Activated B cell treated with CpG ODN at 0.5 μM for 24 hours (primary cell): ENCODE measurements at regions of chr11 and their contacts with region 1.

Region 1: GRCh38 chr11:101914738-101915426 is at the start of gene CEP126:
- DNase-seq: peak; percentile 98
- ATAC-seq: peak; percentile 90
- H3K4me3 Mint-ChIP-seq: peak within 1 kb of the TSS; percentile 94
- H3K27ac Mint-ChIP-seq: peak within 1 kb of the TSS; percentile 95
- H3K4me1 Mint-ChIP-seq: peaks cover 27% of the 10 kb centered on the region
- H3K27me3 Mint-ChIP-seq: peaks cover 10% of the 10 kb centered on the region
- CTCF ChIP-seq: no peak
- total RNA-seq, gene CEP126: 1.4 and 1.5 TPM in 2 replicates

Region 2: GRCh38 chr11:100681064-100681502 is 1233.8 kb before region 1 on chr11:
- CTCF ChIA-PET with region 1: no interaction called
- POLR2A ChIA-PET with region 1: no interaction called
- intact Hi-C with region 1: loop called (anchors 1 kb)
- DNase-seq: peak; percentile 58
- ATAC-seq: peak; percentile 98
- H3K4me3 Mint-ChIP-seq: peak overlapping the region; percentile 35
- H3K27ac Mint-ChIP-seq: peak overlapping the region; percentile 79
- H3K4me1 Mint-ChIP-seq: peaks cover 57% of the 10 kb centered on the region
- H3K27me3 Mint-ChIP-seq: no peaks in the 10 kb centered on the region
- CTCF ChIP-seq: no peak

Region 3: DNA sequence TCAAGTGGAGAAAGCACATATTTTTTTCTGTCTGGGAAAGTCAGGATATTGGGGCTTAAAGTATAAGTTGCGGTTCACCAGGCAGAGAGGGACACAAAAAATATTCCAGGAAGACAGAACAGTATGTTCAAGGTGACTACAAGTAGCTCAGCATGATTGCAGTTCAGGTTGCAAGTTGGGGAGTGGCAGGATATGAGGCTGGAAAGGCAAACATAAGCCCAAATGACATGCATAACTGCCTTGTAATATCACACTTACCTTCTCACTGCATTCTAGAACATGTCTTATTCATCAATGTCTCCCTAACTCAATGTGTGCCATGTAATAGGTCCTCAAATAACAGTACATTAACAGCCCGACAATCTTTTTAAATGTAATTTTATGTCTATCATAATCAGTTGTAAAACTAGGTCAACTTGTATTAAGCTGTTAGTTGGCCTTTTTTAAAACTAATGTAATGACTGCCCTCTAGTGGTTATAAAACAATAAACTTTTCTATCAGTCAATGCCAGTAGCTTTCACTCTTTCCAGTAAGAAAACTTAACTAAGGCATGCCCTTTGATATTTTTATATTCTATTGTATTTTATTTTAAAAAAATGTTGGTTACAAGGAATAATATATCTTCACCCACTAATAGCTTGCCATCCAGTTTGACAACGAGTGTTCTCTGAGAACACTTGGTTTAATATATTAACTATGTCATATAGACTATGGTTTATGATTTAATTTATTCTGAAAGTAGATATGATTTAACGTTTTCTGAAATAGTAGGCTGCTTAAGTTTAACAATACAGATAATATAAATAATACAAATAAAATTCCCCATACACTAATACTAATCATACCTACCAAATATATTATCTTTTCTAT is 92.9 kb after region 1 on chr11:
- CTCF ChIA-PET with region 1: interaction called, 7 read pairs
- POLR2A ChIA-PET with region 1: interaction called, 5 read pairs
- intact Hi-C with region 1: loop called (anchors 1 kb)
- DNase-seq: no peak
- ATAC-seq: no peak
- H3K4me3 Mint-ChIP-seq: no peak overlapping the region
- H3K27ac Mint-ChIP-seq: no peak overlapping the region
- H3K4me1 Mint-ChIP-seq: no peaks in the 10 kb centered on the region
- H3K27me3 Mint-ChIP-seq: peaks cover 11% of the 10 kb centered on the region
- CTCF ChIP-seq: peak; percentile 81

Region 4: DNA sequence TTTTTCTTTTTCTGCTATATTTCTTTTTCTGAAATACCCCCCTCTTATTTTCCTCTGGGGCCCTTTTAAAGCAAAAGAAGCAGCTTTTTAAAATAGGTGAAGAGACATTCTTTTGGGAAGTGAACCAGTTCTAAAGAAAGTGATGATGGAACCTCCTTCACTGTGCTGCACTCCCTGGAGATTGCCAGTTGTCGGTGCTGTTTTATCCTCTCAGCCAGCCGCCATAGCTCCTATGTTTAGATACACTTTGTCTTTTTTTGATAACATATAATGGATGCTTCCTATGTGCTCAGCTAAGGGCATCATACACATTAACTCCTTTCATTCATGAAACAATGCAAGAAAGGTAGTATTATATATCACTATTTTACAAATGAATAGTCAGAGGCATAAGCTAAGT is 146.4 kb after region 1 on chr11:
- CTCF ChIA-PET with region 1: no interaction called
- POLR2A ChIA-PET with region 1: no interaction called
- intact Hi-C with region 1: no loop called
- DNase-seq: no peak
- ATAC-seq: no peak
- H3K4me3 Mint-ChIP-seq: no peak overlapping the region
- H3K27ac Mint-ChIP-seq: no peak overlapping the region
- H3K4me1 Mint-ChIP-seq: no peaks in the 10 kb centered on the region
- H3K27me3 Mint-ChIP-seq: peaks cover 3% of the 10 kb centered on the region
- CTCF ChIP-seq: no peak

Region 5: DNA sequence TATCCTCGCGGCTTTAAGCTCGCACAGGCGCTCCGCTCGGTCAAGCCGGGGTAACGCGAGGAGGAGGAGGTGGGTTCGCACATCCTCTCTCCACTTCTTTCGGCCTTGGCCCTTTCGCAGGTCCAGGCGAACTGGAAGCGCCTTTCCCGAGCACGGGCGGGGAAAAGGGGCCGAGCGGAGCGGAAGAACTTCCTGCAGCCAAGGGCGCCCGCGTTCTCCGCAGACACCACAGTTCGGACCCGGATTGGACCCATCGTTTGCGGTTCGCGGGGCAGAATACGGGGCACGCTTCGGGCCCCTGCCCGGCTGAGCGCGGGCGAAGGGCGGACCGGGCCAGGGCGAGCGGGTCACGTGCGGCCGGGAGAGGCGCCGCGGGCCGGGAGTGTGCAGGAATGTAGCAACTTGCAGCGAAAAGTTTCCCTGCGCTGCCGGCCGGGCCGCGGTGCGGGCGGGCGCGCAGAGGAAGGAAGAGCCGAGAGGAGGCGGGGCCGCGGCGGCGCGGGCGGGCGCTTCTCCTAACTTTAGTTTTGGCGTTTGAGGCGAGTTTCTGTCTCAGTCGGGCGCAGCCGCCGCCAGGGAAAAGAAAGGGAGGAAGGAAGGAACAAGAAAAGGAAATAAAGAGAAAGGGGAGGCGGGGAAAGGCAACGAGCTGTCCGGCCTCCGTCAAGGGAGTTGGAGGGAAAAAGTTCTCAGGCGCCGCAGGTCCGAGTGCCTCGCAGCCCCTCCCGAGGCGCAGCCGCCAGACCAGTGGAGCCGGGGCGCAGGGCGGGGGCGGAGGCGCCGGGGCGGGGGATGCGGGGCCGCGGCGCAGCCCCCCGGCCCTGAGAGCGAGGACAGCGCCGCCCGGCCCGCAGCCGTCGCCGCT is 195.2 kb after region 1 on chr11 and contains the start of gene YAP1:
- CTCF ChIA-PET with region 1: no interaction called
- POLR2A ChIA-PET with region 1: no interaction called
- intact Hi-C with region 1: loop called (anchors 2 kb)
- DNase-seq: peak; percentile 64
- ATAC-seq: peak; percentile 75
- H3K4me3 Mint-ChIP-seq: peak within 1 kb of the TSS; percentile 96
- H3K27ac Mint-ChIP-seq: peak within 1 kb of the TSS; percentile 72
- H3K4me1 Mint-ChIP-seq: peaks cover 12% of the 10 kb centered on the region
- H3K27me3 Mint-ChIP-seq: peaks cover 41% of the 10 kb centered on the region
- CTCF ChIP-seq: no peak
- total RNA-seq, gene YAP1: not detected in 2 replicates

Region 6: GRCh38 chr11:102268329-102269193 is 353.7 kb after region 1 on chr11:
- CTCF ChIA-PET with region 1: no interaction called
- POLR2A ChIA-PET with region 1: no interaction called
- intact Hi-C with region 1: loop called (anchors 5 kb)
- DNase-seq: peak; percentile 54
- ATAC-seq: peak; percentile 100
- H3K4me3 Mint-ChIP-seq: peak overlapping the region; percentile 56
- H3K27ac Mint-ChIP-seq: no peak overlapping the region
- H3K4me1 Mint-ChIP-seq: peaks cover 15% of the 10 kb centered on the region
- H3K27me3 Mint-ChIP-seq: peaks cover 14% of the 10 kb centered on the region
- CTCF ChIP-seq: no peak

Region 7: GRCh38 chr11:103091801-103092524 is 1177.1 kb after region 1 on chr11 and contains the start of gene DCUN1D5:
- CTCF ChIA-PET with region 1: no interaction called
- POLR2A ChIA-PET with region 1: no interaction called
- intact Hi-C with region 1: loop called (anchors 5 kb)
- DNase-seq: peak; percentile 90
- ATAC-seq: peak; percentile 99
- H3K4me3 Mint-ChIP-seq: peak within 1 kb of the TSS; percentile 93
- H3K27ac Mint-ChIP-seq: peak within 1 kb of the TSS; percentile 88
- H3K4me1 Mint-ChIP-seq: peaks cover 26% of the 10 kb centered on the region
- H3K27me3 Mint-ChIP-seq: peaks cover 23% of the 10 kb centered on the region
- CTCF ChIP-seq: no peak
- total RNA-seq, gene DCUN1D5: 20.9 and 21.4 TPM in 2 replicates

Region 8: GRCh38 chr11:103108933-103109817 is 1194.3 kb after region 1 on chr11 and contains the start of gene DYNC2H1:
- CTCF ChIA-PET with region 1: no interaction called
- POLR2A ChIA-PET with region 1: no interaction called
- intact Hi-C with region 1: loop called (anchors 5 kb)
- DNase-seq: peak; percentile 84
- ATAC-seq: peak; percentile 94
- H3K4me3 Mint-ChIP-seq: peak within 1 kb of the TSS; percentile 95
- H3K27ac Mint-ChIP-seq: peak within 1 kb of the TSS; percentile 85
- H3K4me1 Mint-ChIP-seq: peaks cover 13% of the 10 kb centered on the region
- H3K27me3 Mint-ChIP-seq: peaks cover 6% of the 10 kb centered on the region
- CTCF ChIP-seq: no peak
- total RNA-seq, gene DYNC2H1: 2.6 and 3.2 TPM in 2 replicates

Region 9: GRCh38 chr11:103274025-103274424 is 1359.1 kb after region 1 on chr11:
- CTCF ChIA-PET with region 1: no interaction called
- POLR2A ChIA-PET with region 1: no interaction called
- intact Hi-C with region 1: no loop called
- DNase-seq: no peak
- ATAC-seq: no peak
- H3K4me3 Mint-ChIP-seq: no peak overlapping the region
- H3K27ac Mint-ChIP-seq: no peak overlapping the region
- H3K4me1 Mint-ChIP-seq: no peaks in the 10 kb centered on the region
- H3K27me3 Mint-ChIP-seq: no peaks in the 10 kb centered on the region
- CTCF ChIP-seq: no peak